GM12878 (cell line): ENCODE measurements at regions of chr16 and their contacts with region 1.

Region 1: DNA sequence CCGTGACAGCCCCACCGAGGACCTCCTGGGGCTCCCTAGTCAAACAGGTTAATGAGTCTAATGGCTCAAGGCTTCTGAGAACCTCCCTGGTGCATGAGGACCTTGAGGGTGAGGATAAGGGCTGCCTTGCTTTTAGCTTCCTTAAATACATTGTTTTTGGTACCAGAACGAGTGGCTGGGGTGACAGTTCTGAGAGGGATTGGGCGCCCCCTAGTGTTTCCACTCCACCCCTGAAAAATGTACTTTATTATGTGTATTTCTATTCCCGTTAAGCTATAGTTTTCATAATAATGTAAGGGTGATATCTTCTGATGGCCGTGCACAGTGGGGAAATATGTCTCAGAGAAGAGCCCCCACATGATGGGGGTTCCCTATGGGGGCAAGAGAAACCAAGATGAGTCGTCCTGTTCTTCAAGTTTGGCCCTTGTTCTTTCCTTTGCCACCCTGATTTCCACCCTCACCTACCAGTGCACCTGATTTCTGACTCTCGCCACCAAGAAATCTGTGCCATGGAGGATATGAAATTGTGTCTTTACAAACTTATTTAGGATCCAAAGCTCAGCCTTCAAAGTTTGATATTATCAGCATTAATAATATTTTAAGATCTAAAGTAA is 14.5 kb upstream of the VWA3A start:
- DNase-seq: no peak
- ATAC-seq: peak; percentile 92
- H3K4me3 ChIP-seq: no peak overlapping the region
- H3K27ac ChIP-seq: no peak overlapping the region
- H3K4me1 ChIP-seq: no peaks in the 10 kb centered on the region
- H3K27me3 ChIP-seq: no peaks in the 10 kb centered on the region
- CTCF ChIP-seq: peak; percentile 72 to 85 (median 74)
- EP300 ChIP-seq: no peak; a peak in 1 of 4 replicates
- POLR2A ChIP-seq: no peak
- RAD21 ChIP-seq: peak; percentile 89

Region 2: GRCh38 chr16:21946889-21947635 is 130.7 kb before region 1 on chr16:
- CTCF ChIA-PET with region 1: interaction called, 16 read pairs
- POLR2A ChIA-PET with region 1: interaction called, 3 read pairs
- RAD21 ChIA-PET with region 1: interaction called, 19 read pairs
- SMC1A ChIA-PET with region 1: interaction called, 26 read pairs
- in situ Hi-C with region 1: no loop called
- intact Hi-C with region 1: no loop called
- DNase-seq: no peak
- ATAC-seq: peak; percentile 79
- H3K4me3 ChIP-seq: no peak overlapping the region
- H3K27ac ChIP-seq: no peak overlapping the region
- H3K4me1 ChIP-seq: peaks cover 11% of the 10 kb centered on the region; the same call in 1 of the 2 replicates
- H3K27me3 ChIP-seq: no peaks in the 10 kb centered on the region
- CTCF ChIP-seq: no peak; a peak in 1 of 6 replicates
- EP300 ChIP-seq: no peak
- POLR2A ChIP-seq: no peak
- RAD21 ChIP-seq: no peak

Region 3: GRCh38 chr16:21989133-21989532 is 88.7 kb before region 1 on chr16:
- CTCF ChIA-PET with region 1: interaction called, 686 read pairs
- POLR2A ChIA-PET with region 1: interaction called, 3 read pairs
- RAD21 ChIA-PET with region 1: interaction called, 16 read pairs
- SMC1A ChIA-PET with region 1: interaction called, 567 read pairs
- in situ Hi-C with region 1: no loop called
- intact Hi-C with region 1: no loop called
- DNase-seq: no peak
- ATAC-seq: no peak
- H3K4me3 ChIP-seq: no peak overlapping the region
- H3K27ac ChIP-seq: no peak overlapping the region
- H3K4me1 ChIP-seq: no peaks in the 10 kb centered on the region
- H3K27me3 ChIP-seq: no peaks in the 10 kb centered on the region
- CTCF ChIP-seq: no peak
- EP300 ChIP-seq: no peak
- POLR2A ChIP-seq: no peak
- RAD21 ChIP-seq: no peak

Region 4: GRCh38 chr16:22023505-22023904 is 54.3 kb before region 1 on chr16:
- CTCF ChIA-PET with region 1: interaction called, 51 read pairs
- POLR2A ChIA-PET with region 1: no interaction called
- RAD21 ChIA-PET with region 1: interaction called, 27 read pairs
- SMC1A ChIA-PET with region 1: interaction called, 17 read pairs
- in situ Hi-C with region 1: no loop called
- intact Hi-C with region 1: no loop called
- DNase-seq: peak; percentile 44
- ATAC-seq: peak; percentile 94
- H3K4me3 ChIP-seq: no peak overlapping the region
- H3K27ac ChIP-seq: no peak overlapping the region
- H3K4me1 ChIP-seq: peaks cover 23% of the 10 kb centered on the region
- H3K27me3 ChIP-seq: no peaks in the 10 kb centered on the region
- CTCF ChIP-seq: no peak
- EP300 ChIP-seq: peak in 1 of 2 experiments; percentile 28; a peak in 1 of 4 replicates
- POLR2A ChIP-seq: no peak
- RAD21 ChIP-seq: no peak

Region 5: GRCh38 chr16:22091758-22092600 is 14.2 kb after region 1 on chr16 and contains the start of gene VWA3A:
- CTCF ChIA-PET with region 1: interaction called, 94 read pairs
- POLR2A ChIA-PET with region 1: interaction called, 4 read pairs
- RAD21 ChIA-PET with region 1: interaction called, 8 read pairs
- SMC1A ChIA-PET with region 1: interaction called, 28 read pairs
- in situ Hi-C with region 1: no loop called
- intact Hi-C with region 1: no loop called
- DNase-seq: no peak
- ATAC-seq: no peak
- H3K4me3 ChIP-seq: no peak within 1 kb of the TSS
- H3K27ac ChIP-seq: no peak within 1 kb of the TSS
- H3K4me1 ChIP-seq: no peaks in the 10 kb centered on the region
- H3K27me3 ChIP-seq: no peaks in the 10 kb centered on the region
- CTCF ChIP-seq: no peak
- EP300 ChIP-seq: no peak
- POLR2A ChIP-seq: no peak
- RAD21 ChIP-seq: no peak
- polyA plus RNA-seq, gene VWA3A: not detected

Region 6: DNA sequence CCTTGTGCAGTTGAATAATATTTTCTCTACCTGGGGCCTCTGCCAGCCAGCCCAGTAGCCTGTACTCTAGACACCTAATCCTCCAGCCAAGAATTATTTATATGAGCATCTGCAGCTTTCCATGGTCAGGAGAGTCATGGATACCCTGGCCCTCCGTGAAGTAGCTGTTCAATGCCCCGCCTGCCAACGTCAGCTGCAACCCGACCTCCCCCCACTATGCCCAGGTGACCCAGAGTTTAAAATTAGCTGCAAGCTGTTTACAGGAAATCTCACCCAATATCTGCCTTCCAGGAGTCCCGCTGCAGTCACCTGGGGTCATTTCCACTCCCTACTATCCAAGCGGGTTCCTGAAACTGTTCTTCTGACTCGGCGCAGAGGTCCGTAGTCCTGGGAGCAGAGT is 96.8 kb after region 1 on chr16:
- CTCF ChIA-PET with region 1: interaction called, 12 read pairs
- POLR2A ChIA-PET with region 1: no interaction called
- RAD21 ChIA-PET with region 1: no interaction called
- SMC1A ChIA-PET with region 1: no interaction called
- in situ Hi-C with region 1: no loop called
- intact Hi-C with region 1: no loop called
- DNase-seq: no peak
- ATAC-seq: no peak
- H3K4me3 ChIP-seq: no peak overlapping the region
- H3K27ac ChIP-seq: no peak overlapping the region
- H3K4me1 ChIP-seq: no peaks in the 10 kb centered on the region
- H3K27me3 ChIP-seq: no peaks in the 10 kb centered on the region; a peak in 1 of 4 replicates
- CTCF ChIP-seq: no peak
- EP300 ChIP-seq: no peak
- POLR2A ChIP-seq: no peak
- RAD21 ChIP-seq: no peak

Region 7: GRCh38 chr16:22206013-22206841 is 128.4 kb after region 1 on chr16 and contains the start of gene EEF2K:
- CTCF ChIA-PET with region 1: no interaction called
- POLR2A ChIA-PET with region 1: no interaction called
- RAD21 ChIA-PET with region 1: no interaction called
- SMC1A ChIA-PET with region 1: no interaction called
- in situ Hi-C with region 1: no loop called
- intact Hi-C with region 1: no loop called
- DNase-seq: peak; percentile 83
- ATAC-seq: peak; percentile 92
- H3K4me3 ChIP-seq: peak within 1 kb of the TSS; percentile 88
- H3K27ac ChIP-seq: peak within 1 kb of the TSS; percentile 65
- H3K4me1 ChIP-seq: peaks cover 11% of the 10 kb centered on the region
- H3K27me3 ChIP-seq: no peaks in the 10 kb centered on the region
- CTCF ChIP-seq: peak; percentile 76 to 93 (median 76)
- EP300 ChIP-seq: peak; percentile 28 to 37; a peak in 2 of 4 replicates
- POLR2A ChIP-seq: peak; percentile 81
- RAD21 ChIP-seq: peak; percentile 59
- polyA plus RNA-seq, gene EEF2K: 2.0 to 2.4 TPM